ENCODE measurements at regions of chr13 and their contacts with region 1.

Region 1: GRCh38 chr13:87680298-87680697 is 9.1 kb downstream of the SLITRK5 start:
- DNase-seq: peak; percentile 63
- H3K4me3 Mint-ChIP-seq: no peak overlapping the region
- H3K27ac Mint-ChIP-seq: no peak overlapping the region
- H3K4me1 Mint-ChIP-seq: peaks cover 15% of the 10 kb centered on the region
- H3K27me3 Mint-ChIP-seq: no peaks in the 10 kb centered on the region
- CTCF ChIP-seq: peak; percentile 32

Region 2: GRCh38 chr13:87696458-87696857 is 16.2 kb after region 1 on chr13:
- CTCF ChIA-PET with region 1: no interaction called
- POLR2A ChIA-PET with region 1: no interaction called
- intact Hi-C with region 1: no loop called
- DNase-seq: no peak
- H3K4me3 Mint-ChIP-seq: no peak overlapping the region
- H3K27ac Mint-ChIP-seq: no peak overlapping the region
- H3K4me1 Mint-ChIP-seq: no peaks in the 10 kb centered on the region
- H3K27me3 Mint-ChIP-seq: no peaks in the 10 kb centered on the region
- CTCF ChIP-seq: no peak

Region 3: GRCh38 chr13:87999791-88000190 is 319.5 kb after region 1 on chr13:
- CTCF ChIA-PET with region 1: interaction called, 3 read pairs
- POLR2A ChIA-PET with region 1: no interaction called
- intact Hi-C with region 1: loop called (anchors 10 kb)
- DNase-seq: peak; percentile 10
- H3K4me3 Mint-ChIP-seq: no peak overlapping the region
- H3K27ac Mint-ChIP-seq: peak overlapping the region; percentile 78
- H3K4me1 Mint-ChIP-seq: peaks cover 15% of the 10 kb centered on the region
- H3K27me3 Mint-ChIP-seq: no peaks in the 10 kb centered on the region
- CTCF ChIP-seq: no peak

Region 4: DNA sequence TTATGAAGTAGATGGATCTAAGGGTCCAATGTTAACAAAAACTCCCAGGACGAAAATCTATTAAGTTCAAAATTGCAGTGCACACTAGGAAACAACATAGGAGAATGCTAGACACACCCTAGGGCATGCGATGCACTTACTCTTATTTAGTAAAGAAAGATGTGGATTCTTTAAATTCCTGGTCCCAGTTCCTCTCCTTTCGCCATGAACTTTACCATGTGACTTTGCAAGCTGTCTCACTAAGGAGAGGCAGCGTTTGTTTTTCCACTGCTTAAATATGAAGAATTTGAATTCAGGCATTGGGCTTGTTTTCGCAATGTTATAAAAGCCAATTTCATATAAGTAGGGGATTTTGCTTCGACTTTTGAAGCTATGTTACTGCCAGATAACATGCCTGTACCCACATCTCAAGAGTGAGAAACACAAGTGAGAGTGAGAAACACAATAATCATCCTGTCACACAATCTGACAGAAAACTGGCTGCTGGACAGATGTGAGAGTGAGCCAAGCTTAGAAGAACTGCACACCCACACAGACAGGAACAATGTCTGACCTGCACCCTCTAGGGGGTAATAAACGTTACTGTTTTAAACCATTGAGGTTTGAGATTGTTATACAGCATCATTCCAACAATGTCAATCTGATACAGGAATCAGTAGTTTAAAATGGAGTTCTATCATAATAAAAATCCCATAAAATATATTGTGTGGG is 1299.3 kb after region 1 on chr13:
- CTCF ChIA-PET with region 1: no interaction called
- POLR2A ChIA-PET with region 1: no interaction called
- intact Hi-C with region 1: loop called (anchors 2 kb)
- DNase-seq: peak; percentile 29
- H3K4me3 Mint-ChIP-seq: no peak overlapping the region
- H3K27ac Mint-ChIP-seq: no peak overlapping the region
- H3K4me1 Mint-ChIP-seq: no peaks in the 10 kb centered on the region
- H3K27me3 Mint-ChIP-seq: no peaks in the 10 kb centered on the region
- CTCF ChIP-seq: peak; percentile 23